Heart right ventricle (tissue), 16 donors: ENCODE measurements at regions of chr17 and their contacts with region 1.

Region 1: GRCh38 chr17:5706577-5707216 is 122.4 kb upstream of the NLRP1 start:
- DNase-seq: peak; percentile 20 to 43
- ATAC-seq: peak in 1 of 8 donors; percentile 44
- H3K4me3 ChIP-seq: no peak overlapping the region
- H3K27ac ChIP-seq: no peak overlapping the region
- H3K4me1 ChIP-seq: no peaks in the 10 kb centered on the region
- H3K27me3 ChIP-seq: peaks cover 0 to 56% (median 19%) of the 10 kb centered on the region in 7 donors
- CTCF ChIP-seq: peak in 8 of 9 donors; percentile 20 to 72 (median 57)

Region 2: GRCh38 chr17:5793899-5794298 is 87.2 kb after region 1 on chr17:
- intact Hi-C with region 1: no loop called
- DNase-seq: no peak
- ATAC-seq: no peak
- H3K4me3 ChIP-seq: no peak overlapping the region
- H3K27ac ChIP-seq: no peak overlapping the region
- H3K4me1 ChIP-seq: no peaks in the 10 kb centered on the region
- H3K27me3 ChIP-seq: peaks cover 0 to 65% (median 30%) of the 10 kb centered on the region in 7 donors
- CTCF ChIP-seq: peak in 2 of 9 donors; percentile 4 to 5

Region 3: DNA sequence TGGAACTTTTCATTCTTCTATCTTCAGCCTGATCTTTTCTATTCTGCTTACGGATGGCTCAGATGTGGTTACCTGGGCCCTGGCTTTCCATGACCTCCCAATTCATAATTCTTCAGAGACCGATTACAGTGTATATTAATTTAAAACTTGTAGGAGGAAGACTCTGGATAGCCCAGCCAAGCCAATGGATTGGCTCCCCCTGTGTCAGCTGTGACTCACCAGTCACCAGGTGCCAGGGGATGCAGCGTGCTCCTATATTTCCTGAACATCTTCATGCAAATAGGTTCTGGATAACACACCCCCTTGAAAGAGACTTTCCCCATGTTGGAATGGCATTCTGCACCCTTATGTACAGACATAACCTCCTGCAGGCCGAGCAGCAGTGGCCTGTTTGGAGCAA is 155.2 kb after region 1 on chr17:
- intact Hi-C with region 1: no loop called
- DNase-seq: no peak
- ATAC-seq: no peak
- H3K4me3 ChIP-seq: no peak overlapping the region
- H3K27ac ChIP-seq: no peak overlapping the region
- H3K4me1 ChIP-seq: peaks cover 0 to 11% (median 4%) of the 10 kb centered on the region in 9 donors
- H3K27me3 ChIP-seq: no peaks in the 10 kb centered on the region
- CTCF ChIP-seq: no peak

Region 4: GRCh38 chr17:6421700-6422604 is 715.3 kb after region 1 on chr17:
- intact Hi-C with region 1: loop called in 3 of 10 experiments (anchors 10 kb)
- DNase-seq: peak; percentile 75 to 76
- ATAC-seq: peak; percentile 70 to 93 (median 86)
- H3K4me3 ChIP-seq: no peak overlapping the region
- H3K27ac ChIP-seq: no peak overlapping the region
- H3K4me1 ChIP-seq: no peaks in the 10 kb centered on the region
- H3K27me3 ChIP-seq: peaks cover 0 to 45% (median 15%) of the 10 kb centered on the region in 7 donors
- CTCF ChIP-seq: peak; percentile 74 to 93 (median 88)